H1 (cell line): ENCODE measurements at regions of chr3 and their contacts with region 1.

Region 1: DNA sequence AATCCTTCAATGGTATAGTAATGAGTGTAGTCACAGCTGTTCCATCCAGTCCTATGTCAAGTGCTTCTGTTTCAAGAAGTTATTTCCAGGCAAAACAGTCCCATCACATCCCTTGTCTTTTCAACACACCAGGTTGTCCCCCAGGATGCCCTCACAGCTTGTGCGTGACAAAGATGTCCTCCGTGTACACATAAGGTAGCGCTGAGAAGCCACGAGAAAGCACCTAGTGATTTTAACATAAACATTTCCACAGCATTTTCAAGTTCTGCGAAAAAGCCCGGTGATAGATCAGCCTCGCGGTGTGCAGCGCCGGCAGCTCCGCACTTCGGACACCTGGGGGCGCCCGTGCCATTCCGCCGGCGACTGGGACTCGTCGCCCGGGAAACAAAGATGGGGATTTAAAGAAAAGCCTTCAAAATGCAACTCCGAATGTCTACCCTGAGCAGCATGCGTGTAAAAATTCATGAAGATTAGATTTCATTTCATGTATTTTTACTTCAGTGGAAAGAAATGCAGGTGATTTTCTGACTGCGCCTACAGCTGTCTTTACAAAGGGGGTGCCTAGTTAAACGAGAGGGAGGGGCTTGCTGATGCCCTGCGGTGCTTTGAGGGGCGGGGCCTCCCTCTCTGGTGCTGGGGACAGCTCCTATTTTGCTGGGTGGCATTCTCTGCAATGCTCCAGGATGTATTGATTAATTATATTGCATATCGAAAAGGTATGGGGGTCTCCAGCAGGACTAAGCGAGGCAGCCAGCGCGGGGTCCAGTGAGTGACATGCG is 49.9 kb downstream of the KY start:
- DNase-seq: peak in 1 of 2 experiments; percentile 89
- H3K4me3 ChIP-seq: peak overlapping the region in 3 of 4 experiments; percentile 19 to 53 (median 27); a peak in 5 of 8 replicates
- H3K27ac ChIP-seq: no peak overlapping the region
- H3K4me1 ChIP-seq: peaks cover 0 to 10% (median 2%) of the 10 kb centered on the region in 4 experiments; a peak in 3 of 7 replicates
- H3K27me3 ChIP-seq: peaks cover 0 to 5% (median 2%) of the 10 kb centered on the region in 4 experiments; a peak in 2 of 7 replicates
- CTCF ChIP-seq: peak in 2 of 3 experiments; percentile 86 to 93; a peak in 3 of 4 replicates
- EP300 ChIP-seq: no peak
- POLR2A ChIP-seq: no peak
- RAD21 ChIP-seq: peak; percentile 96 to 97

Region 2: DNA sequence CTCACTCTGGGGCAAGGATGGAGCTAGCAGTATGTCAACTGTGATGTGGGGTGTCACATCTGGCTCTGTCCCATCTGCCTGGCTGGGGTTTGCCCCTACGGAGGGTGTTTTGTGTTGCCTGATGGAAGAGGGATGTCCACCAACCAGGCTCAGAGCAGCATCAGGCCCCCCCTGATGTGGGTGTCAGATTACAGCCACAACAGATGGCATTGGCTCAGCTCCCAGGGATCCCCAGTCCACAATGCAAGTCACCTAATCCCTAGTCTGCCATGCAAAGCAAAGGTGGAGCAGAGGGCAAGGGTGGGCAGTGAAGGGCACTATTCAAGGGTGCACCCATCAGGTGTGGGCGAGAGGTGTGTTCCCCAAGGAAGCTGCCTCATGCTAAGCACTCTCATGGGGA is 177.7 kb before region 1 on chr3:
- CTCF ChIA-PET with region 1: no interaction called
- POLR2A ChIA-PET with region 1: no interaction called
- DNase-seq: no peak
- H3K4me3 ChIP-seq: no peak overlapping the region
- H3K27ac ChIP-seq: no peak overlapping the region
- H3K4me1 ChIP-seq: peaks cover 0 to 7% (median 5%) of the 10 kb centered on the region in 4 experiments; a peak in 4 of 7 replicates
- H3K27me3 ChIP-seq: no peaks in the 10 kb centered on the region
- CTCF ChIP-seq: no peak
- EP300 ChIP-seq: no peak
- POLR2A ChIP-seq: no peak
- RAD21 ChIP-seq: no peak

Region 3: DNA sequence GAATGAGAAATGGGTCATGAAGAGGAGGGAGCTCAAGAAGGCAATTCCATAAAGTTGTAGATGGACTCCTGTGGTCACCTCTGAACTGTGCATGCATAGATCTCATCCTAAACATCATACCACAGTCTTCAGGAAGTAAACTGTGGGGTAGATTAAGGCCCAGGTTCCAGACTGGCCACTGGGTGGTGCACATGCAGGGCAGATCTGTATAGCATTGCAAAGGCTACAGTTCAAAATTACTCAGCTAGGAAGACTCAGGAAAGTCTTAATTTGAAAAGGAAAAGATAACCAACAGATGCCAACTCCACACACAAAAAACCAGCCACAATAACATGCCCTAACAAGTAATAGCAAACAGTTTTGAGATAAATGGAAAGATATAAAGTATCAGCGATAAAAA is 29.6 kb after region 1 on chr3:
- CTCF ChIA-PET with region 1: interaction called, 197 read pairs
- POLR2A ChIA-PET with region 1: no interaction called
- DNase-seq: peak in 1 of 2 experiments; percentile 35
- H3K4me3 ChIP-seq: no peak overlapping the region
- H3K27ac ChIP-seq: no peak overlapping the region
- H3K4me1 ChIP-seq: no peaks in the 10 kb centered on the region
- H3K27me3 ChIP-seq: no peaks in the 10 kb centered on the region
- CTCF ChIP-seq: peak; percentile 48 to 57 (median 49)
- EP300 ChIP-seq: no peak
- POLR2A ChIP-seq: no peak
- RAD21 ChIP-seq: peak; percentile 45 to 53

Region 4: GRCh38 chr3:134650431-134651346 is 49.8 kb after region 1 on chr3 and contains the start of gene KY:
- CTCF ChIA-PET with region 1: interaction called, 197 read pairs
- POLR2A ChIA-PET with region 1: no interaction called
- DNase-seq: peak; percentile 33 to 80
- H3K4me3 ChIP-seq: peak within 1 kb of the TSS; percentile 30 to 53 (median 42)
- H3K27ac ChIP-seq: no peak within 1 kb of the TSS
- H3K4me1 ChIP-seq: peaks cover 0 to 6% (median 2%) of the 10 kb centered on the region in 4 experiments; a peak in 5 of 7 replicates
- H3K27me3 ChIP-seq: peaks cover 57 to 99% (median 89%) of the 10 kb centered on the region in 4 experiments
- CTCF ChIP-seq: peak in 2 of 3 experiments; percentile 0 to 2; a peak in 2 of 4 replicates
- EP300 ChIP-seq: no peak
- POLR2A ChIP-seq: no peak
- RAD21 ChIP-seq: no peak
- total RNA-seq, gene KY: not detected in 2 replicates

Region 5: DNA sequence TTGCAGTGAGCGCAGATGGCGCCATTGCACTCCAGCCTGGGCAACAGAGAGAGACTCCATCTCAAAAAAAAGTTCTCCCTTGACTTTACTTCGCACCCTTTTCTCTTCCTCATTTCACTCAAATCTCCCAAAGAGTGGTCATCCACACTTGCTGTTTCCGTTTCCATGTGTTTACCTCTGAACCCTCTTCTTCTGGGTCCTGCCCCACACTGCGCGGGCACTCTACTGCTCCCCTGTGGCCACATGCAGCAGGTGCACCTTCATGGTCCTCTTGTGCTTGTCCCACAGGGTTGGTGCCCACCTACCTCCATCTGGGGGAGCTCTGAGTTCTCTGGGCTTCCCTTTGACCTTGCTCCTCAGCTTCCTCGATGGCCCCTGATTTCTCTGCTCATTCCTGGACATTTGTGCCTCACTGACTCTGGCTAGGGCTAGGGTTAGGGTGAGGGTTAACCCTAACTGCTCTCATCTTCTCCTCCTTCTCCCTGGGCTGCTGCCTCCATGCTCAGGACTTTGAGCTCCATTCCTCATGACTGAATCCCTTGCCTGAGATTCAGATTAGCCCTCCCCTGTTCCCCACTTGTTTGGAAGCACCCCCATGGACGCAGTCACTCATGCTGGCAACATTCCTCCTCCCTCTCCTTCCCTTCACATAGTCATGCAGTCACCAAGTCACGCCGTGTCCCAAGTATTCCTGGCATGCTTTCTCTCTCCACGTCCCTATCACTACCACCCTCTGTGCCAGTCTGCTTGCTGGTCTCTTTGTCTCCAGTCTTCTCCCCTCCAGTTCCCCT is 76.5 kb after region 1 on chr3:
- CTCF ChIA-PET with region 1: interaction called, 39 read pairs
- POLR2A ChIA-PET with region 1: no interaction called
- DNase-seq: peak; percentile 38 to 79
- H3K4me3 ChIP-seq: no peak overlapping the region
- H3K27ac ChIP-seq: no peak overlapping the region
- H3K4me1 ChIP-seq: no peaks in the 10 kb centered on the region
- H3K27me3 ChIP-seq: peaks cover 0 to 2% (median 0%) of the 10 kb centered on the region in 4 experiments; a peak in 3 of 7 replicates
- CTCF ChIP-seq: peak; percentile 95 to 97 (median 97)
- EP300 ChIP-seq: no peak
- POLR2A ChIP-seq: no peak
- RAD21 ChIP-seq: peak; percentile 66 to 76

Region 6: DNA sequence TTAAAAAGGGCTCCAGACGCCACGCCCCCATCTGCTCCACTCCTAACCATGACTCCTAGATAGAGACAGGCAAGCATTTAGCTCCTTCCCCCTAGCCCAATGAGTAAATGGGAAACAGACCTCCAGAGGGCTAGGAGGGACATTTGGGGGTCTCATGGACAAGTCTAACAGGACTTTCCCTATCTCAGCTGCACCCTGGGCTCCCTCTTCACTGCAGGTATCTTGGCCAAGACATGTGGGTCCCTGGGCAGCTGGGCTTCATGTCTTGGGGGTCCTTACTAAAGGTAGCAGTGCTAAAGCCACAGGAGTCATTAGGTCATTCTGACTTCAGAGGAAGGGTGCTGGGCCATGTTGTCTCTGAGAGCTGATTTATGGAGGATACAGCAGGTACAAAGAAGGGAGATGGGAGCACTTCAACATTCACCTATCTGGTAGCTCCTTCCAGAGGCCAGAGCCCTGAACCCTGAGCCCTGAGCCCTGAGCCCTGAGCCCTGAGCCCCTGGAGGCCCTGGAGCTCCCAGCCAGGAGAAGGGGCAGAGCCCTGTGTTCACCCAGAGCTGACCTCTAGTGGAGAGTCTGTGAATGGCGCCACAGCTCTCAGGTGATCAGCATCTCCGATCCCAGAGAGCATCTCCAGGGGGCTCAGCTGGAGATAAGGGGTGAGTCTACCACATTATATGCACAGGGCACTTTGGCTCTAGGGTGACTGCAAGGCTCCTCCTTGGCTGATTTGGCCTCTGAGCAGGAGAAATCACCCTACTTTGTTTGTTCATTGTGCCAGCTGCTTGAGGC is 154.1 kb after region 1 on chr3:
- CTCF ChIA-PET with region 1: interaction called, 81 read pairs
- POLR2A ChIA-PET with region 1: no interaction called
- DNase-seq: peak; percentile 19 to 81
- H3K4me3 ChIP-seq: no peak overlapping the region
- H3K27ac ChIP-seq: no peak overlapping the region
- H3K4me1 ChIP-seq: no peaks in the 10 kb centered on the region
- H3K27me3 ChIP-seq: no peaks in the 10 kb centered on the region; a peak in 1 of 7 replicates
- CTCF ChIP-seq: peak; percentile 83 to 87 (median 85)
- EP300 ChIP-seq: no peak
- POLR2A ChIP-seq: no peak
- RAD21 ChIP-seq: peak; percentile 62 to 71